ENCODE measurements at regions of chr1 and their contacts with region 1.

Region 1: GRCh38 chr1:157369808-157370521 is 182.3 kb downstream of the FCRL5 start:
- DNase-seq: peak; percentile 36
- H3K4me3 Mint-ChIP-seq: no peak overlapping the region
- H3K27ac Mint-ChIP-seq: no peak overlapping the region
- H3K4me1 Mint-ChIP-seq: no peaks in the 10 kb centered on the region
- H3K27me3 Mint-ChIP-seq: peaks cover 2% of the 10 kb centered on the region

Region 2: DNA sequence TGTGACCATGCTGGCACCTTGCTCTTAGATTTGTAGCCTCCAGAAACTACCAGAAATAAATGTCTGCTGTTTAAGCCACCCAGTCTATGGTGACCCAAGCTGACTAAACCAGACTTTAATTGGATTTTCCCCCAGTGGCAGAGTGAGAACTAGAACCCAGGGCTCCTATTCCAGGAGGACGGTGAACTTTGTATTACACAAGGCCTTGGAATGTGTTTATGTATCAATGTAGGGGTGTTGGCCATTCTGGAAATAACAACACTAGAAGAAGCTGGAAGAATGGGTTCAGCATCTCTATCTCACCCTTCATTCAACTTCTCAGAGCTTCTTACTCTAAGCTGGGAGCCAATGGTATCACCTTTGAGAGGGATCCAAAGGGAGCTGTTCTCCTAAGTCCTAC is 361.5 kb before region 1 on chr1:
- CTCF ChIA-PET with region 1: no interaction called
- POLR2A ChIA-PET with region 1: no interaction called
- intact Hi-C with region 1: no loop called
- DNase-seq: no peak
- H3K4me3 Mint-ChIP-seq: no peak overlapping the region
- H3K27ac Mint-ChIP-seq: no peak overlapping the region
- H3K4me1 Mint-ChIP-seq: no peaks in the 10 kb centered on the region
- H3K27me3 Mint-ChIP-seq: peaks cover 26% of the 10 kb centered on the region

Region 3: DNA sequence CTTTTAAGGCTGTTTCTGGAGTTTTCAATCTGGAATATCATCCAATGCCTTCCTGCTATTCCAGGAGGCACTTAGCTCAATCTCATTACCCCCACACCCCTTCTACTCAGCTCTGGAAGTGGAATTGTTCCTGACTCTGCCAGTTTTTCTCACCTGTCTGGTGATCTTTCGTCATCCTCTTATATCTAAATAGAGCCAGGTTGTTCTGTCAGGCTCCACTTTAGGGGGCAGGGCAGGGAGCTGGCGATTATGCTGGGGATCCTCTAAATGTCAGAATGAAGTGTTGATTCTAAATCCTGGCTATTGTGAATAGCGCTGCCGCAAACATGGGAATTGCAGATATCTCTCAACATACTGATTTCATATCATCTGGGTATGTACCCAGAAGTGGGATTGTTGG is 168.2 kb before region 1 on chr1:
- CTCF ChIA-PET with region 1: no interaction called
- POLR2A ChIA-PET with region 1: no interaction called
- intact Hi-C with region 1: loop called (anchors 5 kb)
- DNase-seq: no peak
- H3K4me3 Mint-ChIP-seq: no peak overlapping the region
- H3K27ac Mint-ChIP-seq: no peak overlapping the region
- H3K4me1 Mint-ChIP-seq: no peaks in the 10 kb centered on the region
- H3K27me3 Mint-ChIP-seq: peaks cover 5% of the 10 kb centered on the region

Region 4: GRCh38 chr1:157348538-157349480 is 21.2 kb before region 1 on chr1:
- CTCF ChIA-PET with region 1: no interaction called
- POLR2A ChIA-PET with region 1: no interaction called
- intact Hi-C with region 1: no loop called
- DNase-seq: no peak
- H3K4me3 Mint-ChIP-seq: no peak overlapping the region
- H3K27ac Mint-ChIP-seq: no peak overlapping the region
- H3K4me1 Mint-ChIP-seq: no peaks in the 10 kb centered on the region
- H3K27me3 Mint-ChIP-seq: peaks cover 19% of the 10 kb centered on the region

Region 5: GRCh38 chr1:157380523-157380922 is 10.6 kb after region 1 on chr1:
- CTCF ChIA-PET with region 1: interaction called, 20 read pairs
- POLR2A ChIA-PET with region 1: no interaction called
- intact Hi-C with region 1: no loop called
- DNase-seq: no peak
- H3K4me3 Mint-ChIP-seq: no peak overlapping the region
- H3K27ac Mint-ChIP-seq: no peak overlapping the region
- H3K4me1 Mint-ChIP-seq: no peaks in the 10 kb centered on the region
- H3K27me3 Mint-ChIP-seq: peaks cover 15% of the 10 kb centered on the region

Region 6: GRCh38 chr1:157490467-157491165 is 120.7 kb after region 1 on chr1:
- CTCF ChIA-PET with region 1: interaction called, 22 read pairs
- POLR2A ChIA-PET with region 1: no interaction called
- intact Hi-C with region 1: loop called (anchors 2 kb)
- DNase-seq: peak; percentile 75
- H3K4me3 Mint-ChIP-seq: no peak overlapping the region
- H3K27ac Mint-ChIP-seq: no peak overlapping the region
- H3K4me1 Mint-ChIP-seq: no peaks in the 10 kb centered on the region
- H3K27me3 Mint-ChIP-seq: peaks cover 19% of the 10 kb centered on the region

Region 7: GRCh38 chr1:157496121-157496526 is 126.2 kb after region 1 on chr1:
- CTCF ChIA-PET with region 1: interaction called, 22 read pairs
- POLR2A ChIA-PET with region 1: no interaction called
- intact Hi-C with region 1: no loop called
- DNase-seq: peak; percentile 27
- H3K4me3 Mint-ChIP-seq: no peak overlapping the region
- H3K27ac Mint-ChIP-seq: no peak overlapping the region
- H3K4me1 Mint-ChIP-seq: no peaks in the 10 kb centered on the region
- H3K27me3 Mint-ChIP-seq: peaks cover 25% of the 10 kb centered on the region